Caco-2 (cell line): ENCODE measurements at regions of chr1 and their contacts with region 1.

Region 1: DNA sequence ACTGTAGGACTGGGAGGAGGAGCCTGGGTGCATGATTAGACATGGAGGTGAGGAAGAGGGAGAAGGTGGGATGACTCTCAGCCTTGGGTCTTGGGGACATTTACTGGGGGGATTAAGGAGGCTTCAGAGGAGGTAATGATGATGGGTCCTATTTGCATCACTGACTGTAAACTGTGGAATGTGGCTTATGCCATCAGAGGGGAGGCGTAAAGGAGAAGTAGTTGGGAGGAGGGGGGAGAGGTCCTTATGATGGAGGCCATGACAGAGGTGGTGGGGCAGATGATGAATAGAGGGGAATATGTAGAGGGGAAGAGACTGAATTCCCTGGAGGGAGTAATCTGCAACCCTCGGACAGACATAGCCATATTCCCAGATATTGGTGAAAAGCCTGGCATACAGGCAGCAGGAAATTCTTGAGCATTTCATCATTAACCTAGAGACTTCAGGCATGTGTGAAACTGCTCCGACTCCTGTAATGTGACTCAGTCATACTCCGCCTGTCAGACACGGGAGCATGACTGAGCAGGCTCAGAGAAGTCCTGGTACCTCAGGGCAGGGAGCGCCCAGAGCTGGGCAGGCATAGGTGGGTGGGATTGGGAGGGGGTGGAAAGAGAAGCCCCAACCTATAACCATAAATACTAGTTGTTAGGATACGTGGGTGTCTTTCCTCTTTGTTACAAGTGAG is 8.0 kb upstream of the LCE5A start:
- DNase-seq: no peak
- H3K4me3 ChIP-seq: no peak overlapping the region
- H3K4me3 Mint-ChIP-seq: no peak overlapping the region
- H3K27ac Mint-ChIP-seq: peak overlapping the region; percentile 50
- H3K4me1 ChIP-seq: peaks cover 17% of the 10 kb centered on the region
- H3K4me1 Mint-ChIP-seq: peaks cover 10% of the 10 kb centered on the region
- H3K27me3 ChIP-seq: no peaks in the 10 kb centered on the region
- H3K27me3 Mint-ChIP-seq: no peaks in the 10 kb centered on the region
- CTCF ChIP-seq: no peak

Region 2: GRCh38 chr1:152141974-152142584 is 360.6 kb before region 1 on chr1:
- CTCF ChIA-PET with region 1: no interaction called
- POLR2A ChIA-PET with region 1: no interaction called
- intact Hi-C with region 1: no loop called
- DNase-seq: peak; percentile 61 to 70
- H3K4me3 ChIP-seq: no peak overlapping the region
- H3K4me3 Mint-ChIP-seq: no peak overlapping the region
- H3K27ac Mint-ChIP-seq: no peak overlapping the region
- H3K4me1 ChIP-seq: no peaks in the 10 kb centered on the region
- H3K4me1 Mint-ChIP-seq: no peaks in the 10 kb centered on the region
- H3K27me3 ChIP-seq: no peaks in the 10 kb centered on the region
- H3K27me3 Mint-ChIP-seq: peaks cover 5% of the 10 kb centered on the region
- CTCF ChIP-seq: peak; percentile 81 to 89

Region 3: DNA sequence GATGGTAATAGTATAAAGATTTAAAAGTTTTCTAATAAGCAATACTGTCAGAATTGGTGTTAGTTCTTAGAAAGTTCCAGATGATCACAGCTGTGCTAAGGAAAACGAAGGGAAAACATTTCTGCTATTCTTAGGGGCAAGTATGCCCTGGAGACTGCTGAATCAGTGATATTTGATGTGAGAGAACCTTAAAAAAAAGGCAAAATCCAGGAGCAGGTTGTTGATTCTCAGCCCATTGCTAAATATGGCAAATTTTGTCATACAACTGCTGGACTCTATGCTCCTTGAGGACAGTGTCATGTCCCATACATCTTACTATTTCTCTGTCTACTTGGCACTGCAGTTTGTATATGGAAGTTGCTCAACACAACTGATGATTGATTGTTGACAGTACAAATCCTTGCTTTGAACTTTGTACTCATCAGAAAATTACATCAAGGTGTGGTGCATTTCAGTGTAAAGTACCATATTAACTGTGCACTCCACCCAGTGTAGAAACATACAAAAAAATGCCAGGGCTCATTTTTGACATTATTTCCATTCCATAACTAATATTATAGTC is 22.5 kb after region 1 on chr1:
- CTCF ChIA-PET with region 1: no interaction called
- POLR2A ChIA-PET with region 1: no interaction called
- intact Hi-C with region 1: loop called (anchors 1 kb)
- DNase-seq: peak in 1 of 2 experiments; percentile 29
- H3K4me3 ChIP-seq: no peak overlapping the region
- H3K4me3 Mint-ChIP-seq: no peak overlapping the region
- H3K27ac Mint-ChIP-seq: no peak overlapping the region
- H3K4me1 ChIP-seq: peaks cover 17% of the 10 kb centered on the region
- H3K4me1 Mint-ChIP-seq: no peaks in the 10 kb centered on the region
- H3K27me3 ChIP-seq: no peaks in the 10 kb centered on the region
- H3K27me3 Mint-ChIP-seq: no peaks in the 10 kb centered on the region
- CTCF ChIP-seq: no peak